Prostate gland (tissue), 2 donors: ENCODE measurements at regions of chr15 and their contacts with region 1.

Region 1: DNA sequence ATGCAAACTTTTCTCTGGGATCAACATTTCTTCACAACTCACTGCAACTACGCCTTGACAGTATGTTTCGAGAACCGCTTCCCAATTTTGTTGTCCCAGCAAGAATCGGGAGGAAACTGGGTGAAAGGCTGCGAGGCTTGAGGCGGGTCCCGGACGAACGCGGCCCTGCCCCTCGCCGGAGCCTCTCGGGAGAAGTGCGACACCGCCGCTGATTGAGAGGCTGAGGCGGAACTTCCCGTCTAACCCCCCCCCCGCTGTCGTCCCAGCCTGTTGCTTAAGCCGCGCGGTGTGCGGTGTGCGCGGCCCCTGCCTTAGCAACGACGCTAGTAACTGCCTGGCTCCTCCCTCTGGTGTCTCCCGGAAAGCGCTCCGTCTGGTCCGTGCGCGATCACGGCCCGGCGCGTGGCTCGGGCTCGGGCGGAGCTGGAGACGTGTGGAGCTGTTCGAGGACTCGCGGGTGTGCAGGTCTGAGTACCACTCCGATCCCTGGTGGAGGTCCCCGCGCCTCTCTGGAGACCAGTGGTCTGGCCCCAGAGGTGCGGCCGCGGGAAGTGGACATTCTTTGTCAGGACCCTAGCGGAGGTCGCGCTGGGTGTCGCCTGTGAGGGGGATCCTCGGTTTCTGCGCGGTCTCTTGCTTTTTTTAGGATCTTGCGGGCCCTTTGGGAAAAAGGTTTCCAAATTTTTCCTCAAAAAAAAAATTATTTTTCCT is at the starts of genes DTWD1 and FAM227B:
- DNase-seq: peak; percentile 95
- H3K4me3 ChIP-seq: peak within 1 kb of the TSS; percentile 62 to 63
- H3K27ac ChIP-seq: peak within 1 kb of the TSS; percentile 86 to 87
- H3K4me1 ChIP-seq: no peaks in the 10 kb centered on the region
- H3K27me3 ChIP-seq: no peaks in the 10 kb centered on the region
- CTCF ChIP-seq: peak in 2 of 4 experiments; percentile 11 to 17
- POLR2A ChIP-seq: peak; percentile 72
- total RNA-seq, gene DTWD1: 16.6 to 21.1 TPM
- total RNA-seq, gene FAM227B: 8.3 to 12.9 TPM

Region 2: DNA sequence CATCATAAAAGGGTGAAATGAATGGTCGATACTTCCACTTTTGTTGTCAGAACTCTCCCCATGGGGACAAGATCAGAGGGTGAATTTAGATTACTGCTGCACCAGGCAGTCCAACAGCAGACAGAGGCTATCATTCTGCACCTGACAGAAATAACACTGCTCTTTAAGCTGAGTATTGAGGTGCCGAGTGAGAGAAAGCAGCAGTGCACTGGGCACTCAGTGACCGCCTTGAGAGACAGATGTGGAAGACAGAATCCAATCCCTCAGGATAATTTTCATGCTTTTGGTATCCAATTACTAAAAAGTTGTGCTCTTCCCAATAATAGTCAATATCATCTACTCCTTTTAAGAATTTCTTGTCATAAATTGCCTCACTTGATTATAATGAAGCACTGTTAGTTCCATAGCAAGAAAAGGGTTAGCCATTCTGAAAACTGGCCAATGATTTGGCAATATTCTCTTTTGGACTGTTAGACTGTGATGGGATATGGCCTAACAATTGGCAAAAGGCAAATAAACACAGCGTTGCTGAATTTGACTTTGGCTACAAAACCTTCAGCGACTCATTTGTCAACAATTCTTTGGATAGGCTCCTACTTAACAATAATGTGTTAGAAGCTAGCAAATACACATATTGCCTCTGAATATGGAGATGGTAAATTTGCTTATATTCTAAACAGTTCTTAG is 192.3 kb before region 1 on chr15:
- intact Hi-C with region 1: loop called (anchors 5 kb)
- DNase-seq: no peak
- H3K4me3 ChIP-seq: no peak overlapping the region
- H3K27ac ChIP-seq: no peak overlapping the region
- H3K4me1 ChIP-seq: no peaks in the 10 kb centered on the region
- H3K27me3 ChIP-seq: no peaks in the 10 kb centered on the region
- CTCF ChIP-seq: no peak
- POLR2A ChIP-seq: no peak

Region 3: GRCh38 chr15:49989498-49989897 is 368.7 kb after region 1 on chr15:
- intact Hi-C with region 1: loop called (anchors 5 kb)
- DNase-seq: no peak
- H3K4me3 ChIP-seq: no peak overlapping the region
- H3K27ac ChIP-seq: peak overlapping the region in 1 of 2 donors; percentile 16
- H3K4me1 ChIP-seq: no peaks in the 10 kb centered on the region
- H3K27me3 ChIP-seq: no peaks in the 10 kb centered on the region
- CTCF ChIP-seq: no peak
- POLR2A ChIP-seq: no peak